Aorta (tissue), 5 donors: ENCODE measurements at regions of chr4 and their contacts with region 1.

Region 1: DNA sequence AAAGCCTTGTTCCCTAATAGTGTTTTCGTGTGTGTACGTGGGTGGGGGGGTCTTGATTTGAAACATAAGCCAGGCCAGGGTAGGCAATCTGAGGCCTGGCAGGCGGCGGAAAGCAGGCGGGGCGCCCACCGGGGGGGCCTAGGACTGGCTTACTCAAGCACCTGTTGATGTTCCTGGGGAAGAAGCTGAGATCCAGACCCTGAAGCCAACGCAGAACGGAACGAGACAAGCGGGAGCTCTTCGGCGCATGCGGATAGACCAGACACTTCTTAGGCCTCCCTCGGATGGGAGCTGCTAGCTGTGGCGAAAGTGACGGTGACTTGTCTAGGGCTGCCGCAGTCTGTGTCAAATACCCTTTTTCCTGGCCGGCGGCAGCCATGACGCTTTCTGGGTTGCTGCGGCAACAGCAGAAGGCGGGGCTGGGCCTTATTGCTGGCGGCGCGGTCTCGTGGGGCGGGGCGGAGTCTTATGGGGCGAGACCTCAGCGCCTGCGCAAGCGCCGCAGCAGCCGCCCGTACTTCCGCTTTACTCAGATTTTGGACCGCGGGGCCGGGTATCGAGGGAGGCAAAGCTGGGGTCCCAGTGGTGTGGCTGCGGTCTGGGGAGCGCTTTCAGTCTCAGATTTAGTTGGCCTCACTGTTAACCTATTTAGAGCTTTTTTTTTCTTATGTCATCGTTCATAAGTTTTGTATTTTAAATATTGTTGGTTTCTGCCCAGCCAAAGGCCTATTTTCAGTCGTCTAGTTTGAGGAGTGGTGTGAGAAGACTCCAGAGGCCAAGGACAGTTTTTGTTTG is at the start of gene SPATA4:
- DNase-seq: peak; percentile 97 to 98
- ATAC-seq: peak; percentile 98
- H3K4me3 ChIP-seq: peak within 1 kb of the TSS in 1 of 2 donors; percentile 65
- H3K27ac ChIP-seq: no peak within 1 kb of the TSS
- H3K4me1 ChIP-seq: peaks cover 0 to 3% of the 10 kb centered on the region in 2 donors
- H3K27me3 ChIP-seq: no peaks in the 10 kb centered on the region
- total RNA-seq, gene SPATA4: not detected

Region 2: DNA sequence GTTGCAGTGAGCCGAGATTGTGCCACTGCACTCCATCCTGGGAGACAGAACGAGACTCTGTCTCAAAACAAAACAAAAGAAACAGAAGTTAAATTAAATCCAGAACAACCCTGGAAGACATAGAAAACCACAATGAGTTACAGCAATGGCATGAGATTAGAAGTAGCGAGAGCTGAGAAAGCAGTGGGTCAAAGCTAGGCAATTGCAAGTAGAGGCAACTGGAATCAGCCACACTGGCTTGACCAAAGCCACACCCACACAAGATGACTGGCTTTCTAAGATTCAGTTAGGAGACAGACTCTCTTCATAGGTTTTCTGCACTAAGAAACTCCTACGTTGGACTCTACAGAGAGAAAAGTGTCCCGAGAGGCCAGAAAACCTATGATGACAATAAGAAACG is 826.3 kb before region 1 on chr4:
- intact Hi-C with region 1: no loop called
- DNase-seq: no peak
- ATAC-seq: no peak
- H3K4me3 ChIP-seq: no peak overlapping the region
- H3K27ac ChIP-seq: no peak overlapping the region
- H3K4me1 ChIP-seq: no peaks in the 10 kb centered on the region
- H3K27me3 ChIP-seq: no peaks in the 10 kb centered on the region

Region 3: GRCh38 chr4:176002007-176002613 is 193.3 kb before region 1 on chr4:
- intact Hi-C with region 1: no loop called
- DNase-seq: peak; percentile 48 to 81
- ATAC-seq: peak; percentile 54
- H3K4me3 ChIP-seq: peak overlapping the region; percentile 40 to 50
- H3K27ac ChIP-seq: no peak overlapping the region
- H3K4me1 ChIP-seq: no peaks in the 10 kb centered on the region
- H3K27me3 ChIP-seq: no peaks in the 10 kb centered on the region

Region 4: GRCh38 chr4:176277162-176277904 is 82.0 kb after region 1 on chr4:
- intact Hi-C with region 1: loop called in 1 of 2 experiments (anchors 5 kb)
- DNase-seq: peak; percentile 59 to 87
- ATAC-seq: peak; percentile 80
- H3K4me3 ChIP-seq: peak overlapping the region in 1 of 2 donors; percentile 41
- H3K27ac ChIP-seq: no peak overlapping the region
- H3K4me1 ChIP-seq: peaks cover 0 to 3% of the 10 kb centered on the region in 2 donors
- H3K27me3 ChIP-seq: no peaks in the 10 kb centered on the region

Region 5: GRCh38 chr4:176377780-176378179 is 182.4 kb after region 1 on chr4:
- intact Hi-C with region 1: no loop called
- DNase-seq: no peak
- ATAC-seq: no peak
- H3K4me3 ChIP-seq: no peak overlapping the region
- H3K27ac ChIP-seq: no peak overlapping the region
- H3K4me1 ChIP-seq: no peaks in the 10 kb centered on the region
- H3K27me3 ChIP-seq: no peaks in the 10 kb centered on the region